HepG2 (cell line): ENCODE measurements at regions of chr14 and their contacts with region 1.

Region 1: GRCh38 chr14:81170104-81170828 is 50.5 kb downstream of the GTF2A1 start:
- DNase-seq: peak; percentile 84
- ATAC-seq: peak; percentile 98
- H3K4me3 ChIP-seq: peak overlapping the region; percentile 68 to 87 (median 80)
- H3K27ac ChIP-seq: peak overlapping the region; percentile 91
- H3K4me1 ChIP-seq: peaks cover 29% of the 10 kb centered on the region
- H3K27me3 ChIP-seq: no peaks in the 10 kb centered on the region
- CTCF ChIP-seq: peak; percentile 84
- EP300 ChIP-seq: no peak
- POLR2A ChIP-seq: peak; percentile 94 to 96
- RAD21 ChIP-seq: peak; percentile 69

Region 2: GRCh38 chr14:81464247-81465002 is 294.2 kb after region 1 on chr14:
- CTCF ChIA-PET with region 1: no interaction called
- POLR2A ChIA-PET with region 1: interaction called, 3 read pairs
- in situ Hi-C with region 1: no loop called
- intact Hi-C with region 1: loop called (anchors 2 kb)
- DNase-seq: peak; percentile 53
- ATAC-seq: 0 out of 3 replicates have a peak, but pooled peaks have one; percentile 18
- H3K4me3 ChIP-seq: peak overlapping the region; percentile 63 to 71 (median 65); a peak in 5 of 6 replicates
- H3K27ac ChIP-seq: no peak overlapping the region
- H3K4me1 ChIP-seq: peaks cover 29% of the 10 kb centered on the region
- H3K27me3 ChIP-seq: no peaks in the 10 kb centered on the region
- CTCF ChIP-seq: peak; percentile 83
- EP300 ChIP-seq: no peak
- POLR2A ChIP-seq: no peak
- RAD21 ChIP-seq: peak; percentile 67